ENCODE measurements at regions of chr3 and their contacts with region 1.

Region 1: DNA sequence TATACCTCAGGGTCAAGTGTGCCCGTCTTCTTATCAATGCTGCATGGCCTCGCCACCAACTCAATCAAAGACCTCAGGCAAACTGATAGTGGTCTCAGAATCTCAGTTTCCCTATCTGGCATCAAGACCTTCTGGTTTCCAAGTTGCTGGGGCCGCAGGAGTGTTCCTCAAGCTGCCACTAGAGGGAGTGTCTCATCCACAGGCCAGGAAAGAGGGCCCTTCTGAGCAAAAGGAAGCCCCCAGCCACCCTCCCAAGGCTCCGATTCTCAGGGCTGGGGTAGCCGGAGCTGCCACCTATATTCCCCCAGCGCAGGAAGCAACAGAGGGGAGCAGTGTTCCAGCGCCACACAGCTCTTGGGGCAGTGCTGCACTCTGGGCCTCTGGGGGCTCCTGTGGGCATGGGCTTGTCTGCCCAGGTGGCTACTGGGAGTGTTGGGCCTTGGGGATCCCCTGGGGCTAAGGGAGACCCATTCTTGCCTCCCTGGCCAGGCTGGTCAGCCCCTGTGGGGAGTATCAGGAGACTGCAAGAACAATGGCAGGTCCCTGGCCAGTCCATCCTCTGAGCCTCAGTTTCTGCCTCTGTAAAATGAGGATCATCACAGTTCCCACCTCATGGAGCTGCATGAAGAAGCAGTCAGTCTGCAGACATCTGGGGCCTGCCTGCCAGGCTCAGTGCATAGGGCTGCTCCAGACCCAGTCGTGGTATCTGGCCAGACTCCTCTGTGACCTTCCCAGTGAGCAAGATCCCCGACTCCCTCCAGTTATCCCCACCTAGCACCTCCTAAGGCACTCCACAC is 23.4 kb upstream of the SEC13 start:
- DNase-seq: peak in 1 of 2 donors; percentile 68
- ATAC-seq: peak; percentile 46 to 77 (median 64)
- H3K4me3 ChIP-seq: no peak overlapping the region
- H3K27ac ChIP-seq: no peak overlapping the region
- H3K4me1 ChIP-seq: peaks cover 8% of the 10 kb centered on the region
- H3K27me3 ChIP-seq: no peaks in the 10 kb centered on the region
- CTCF ChIP-seq: peak; percentile 83

Region 2: GRCh38 chr3:10693460-10693859 is 349.1 kb after region 1 on chr3:
- intact Hi-C with region 1: loop called (anchors 2 to 10 kb)
- DNase-seq: no peak
- ATAC-seq: peak; percentile 76 to 91 (median 79)
- H3K4me3 ChIP-seq: no peak overlapping the region
- H3K27ac ChIP-seq: peak overlapping the region; percentile 64
- H3K4me1 ChIP-seq: peaks cover 9% of the 10 kb centered on the region
- H3K27me3 ChIP-seq: no peaks in the 10 kb centered on the region
- CTCF ChIP-seq: peak; percentile 54

Region 3: GRCh38 chr3:10738688-10739372 is 394.5 kb after region 1 on chr3:
- intact Hi-C with region 1: loop called (anchors 2 to 5 kb)
- DNase-seq: peak; percentile 71 to 80
- ATAC-seq: peak; percentile 85 to 89 (median 87)
- H3K4me3 ChIP-seq: peak overlapping the region; percentile 60
- H3K27ac ChIP-seq: no peak overlapping the region
- H3K4me1 ChIP-seq: no peaks in the 10 kb centered on the region
- H3K27me3 ChIP-seq: peaks cover 0 to 16% (median 2%) of the 10 kb centered on the region in 3 donors
- CTCF ChIP-seq: peak; percentile 75